Stomach (tissue), 19 donors: ENCODE measurements at regions of chr1 and their contacts with region 1.

Region 1: GRCh38 chr1:31815752-31816500 is at the start of gene SPOCD1:
- DNase-seq: peak; percentile 84 to 91
- H3K4me3 ChIP-seq: peak within 1 kb of the TSS in 2 of 4 donors; percentile 10 to 12
- H3K27ac ChIP-seq: peak within 1 kb of the TSS in 1 of 5 donors; percentile 10
- H3K4me1 ChIP-seq: peaks cover 0 to 17% (median 4%) of the 10 kb centered on the region in 4 donors
- H3K27me3 ChIP-seq: no peaks in the 10 kb centered on the region
- CTCF ChIP-seq: peak in 5 of 7 experiments; percentile 59 to 78 (median 59)
- EP300 ChIP-seq: no peak
- POLR2A ChIP-seq: no peak
- total RNA-seq, gene SPOCD1: 0.55 to 11.1 (median 5.1) TPM in 4 of 5 donors, not detected in the other

Region 2: GRCh38 chr1:31753707-31754349 is 62.1 kb before region 1 on chr1:
- intact Hi-C with region 1: no loop called
- DNase-seq: peak; percentile 75 to 80
- H3K4me3 ChIP-seq: no peak overlapping the region
- H3K27ac ChIP-seq: no peak overlapping the region
- H3K4me1 ChIP-seq: peaks cover 8 to 14% (median 12%) of the 10 kb centered on the region in 4 donors
- H3K27me3 ChIP-seq: peaks cover 0 to 3% (median 0%) of the 10 kb centered on the region in 3 donors
- CTCF ChIP-seq: no peak
- EP300 ChIP-seq: no peak
- POLR2A ChIP-seq: no peak

Region 3: DNA sequence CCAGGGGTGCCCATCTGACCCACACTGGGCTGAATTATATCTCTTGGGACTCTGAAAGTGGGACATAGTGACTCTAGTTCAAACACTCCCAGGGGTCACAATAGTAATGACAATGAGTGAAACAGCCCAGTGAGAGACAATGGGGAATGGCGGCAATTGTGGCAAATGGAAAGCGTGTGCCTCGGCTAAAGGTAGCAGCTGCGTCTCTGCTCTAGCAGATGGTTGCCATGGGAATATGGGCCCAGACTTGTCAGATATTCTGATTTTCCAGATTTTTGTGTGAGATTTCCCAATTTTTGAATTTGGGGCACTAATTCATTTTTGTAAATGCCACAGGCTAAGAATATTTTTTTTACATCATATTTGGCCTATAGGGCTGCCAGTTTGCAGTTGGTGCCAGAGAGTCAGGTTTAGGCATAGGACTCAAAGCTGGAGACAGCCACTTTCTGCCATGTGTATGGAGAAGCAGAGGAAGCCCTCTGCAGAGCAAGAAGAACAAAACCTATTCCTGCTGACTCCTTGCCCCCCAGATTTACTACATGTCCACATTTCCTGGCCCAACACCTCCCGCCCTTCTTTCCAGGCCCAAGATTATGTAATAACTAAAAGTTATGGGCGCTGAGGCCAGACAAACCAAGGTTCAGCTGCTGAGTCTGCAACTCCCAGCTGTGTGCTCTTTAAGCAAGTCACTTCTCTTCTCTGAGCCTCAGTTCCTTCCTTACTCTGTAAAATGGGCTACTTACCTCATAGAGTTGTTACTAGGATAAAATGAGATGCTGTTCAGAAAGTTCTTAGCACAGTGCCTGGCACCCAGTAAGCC is 143.8 kb after region 1 on chr1:
- intact Hi-C with region 1: loop called (anchors 10 kb)
- DNase-seq: no peak
- H3K4me3 ChIP-seq: no peak overlapping the region
- H3K27ac ChIP-seq: no peak overlapping the region
- H3K4me1 ChIP-seq: peaks cover 32 to 69% (median 33%) of the 10 kb centered on the region in 4 donors
- H3K27me3 ChIP-seq: no peaks in the 10 kb centered on the region
- CTCF ChIP-seq: no peak
- EP300 ChIP-seq: no peak
- POLR2A ChIP-seq: no peak

Region 4: DNA sequence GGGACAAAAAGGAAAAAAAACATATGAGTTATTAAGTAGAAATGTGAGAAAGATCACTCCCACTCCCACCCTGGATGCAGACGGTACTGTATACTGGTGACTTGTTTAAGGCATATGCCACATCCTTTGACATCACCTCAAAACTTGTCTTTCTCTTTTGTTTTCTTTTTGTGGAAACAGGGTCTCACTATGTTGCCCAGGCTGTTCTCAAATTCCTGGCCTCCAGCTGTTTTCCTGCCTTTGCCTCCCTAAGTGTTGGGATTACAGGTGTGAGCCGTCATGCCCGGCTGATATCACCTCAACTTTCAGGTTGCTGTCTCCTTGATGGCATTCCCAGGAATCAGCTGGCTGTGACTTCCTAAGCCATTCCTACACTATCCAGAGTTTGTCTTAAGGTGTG is 179.3 kb after region 1 on chr1:
- intact Hi-C with region 1: no loop called
- DNase-seq: no peak
- H3K4me3 ChIP-seq: no peak overlapping the region
- H3K27ac ChIP-seq: no peak overlapping the region
- H3K4me1 ChIP-seq: no peaks in the 10 kb centered on the region
- H3K27me3 ChIP-seq: no peaks in the 10 kb centered on the region
- CTCF ChIP-seq: no peak
- EP300 ChIP-seq: no peak
- POLR2A ChIP-seq: no peak